ENCODE measurements at regions of chr5 and their contacts with region 1.

Region 1: GRCh38 chr5:133944263-133945185 is 23.9 kb downstream of the C5orf15 start:
- DNase-seq: no peak
- H3K4me3 Mint-ChIP-seq: no peak overlapping the region
- H3K27ac Mint-ChIP-seq: no peak overlapping the region
- H3K4me1 Mint-ChIP-seq: peaks cover 6% of the 10 kb centered on the region
- H3K27me3 Mint-ChIP-seq: no peaks in the 10 kb centered on the region

Region 2: GRCh38 chr5:133423618-133424282 is 520.8 kb before region 1 on chr5:
- intact Hi-C with region 1: loop called (anchors 5 kb)
- DNase-seq: peak; percentile 52
- H3K4me3 Mint-ChIP-seq: no peak overlapping the region
- H3K27ac Mint-ChIP-seq: no peak overlapping the region
- H3K4me1 Mint-ChIP-seq: peaks cover 5% of the 10 kb centered on the region
- H3K27me3 Mint-ChIP-seq: peaks cover 13% of the 10 kb centered on the region

Region 3: GRCh38 chr5:133489632-133490031 is 454.9 kb before region 1 on chr5:
- intact Hi-C with region 1: loop called (anchors 2 kb)
- DNase-seq: no peak
- H3K4me3 Mint-ChIP-seq: no peak overlapping the region
- H3K27ac Mint-ChIP-seq: no peak overlapping the region
- H3K4me1 Mint-ChIP-seq: no peaks in the 10 kb centered on the region
- H3K27me3 Mint-ChIP-seq: peaks cover 4% of the 10 kb centered on the region

Region 4: GRCh38 chr5:133552931-133553525 is 391.5 kb before region 1 on chr5:
- intact Hi-C with region 1: loop called (anchors 1 kb)
- DNase-seq: peak; percentile 40
- H3K4me3 Mint-ChIP-seq: no peak overlapping the region
- H3K27ac Mint-ChIP-seq: no peak overlapping the region
- H3K4me1 Mint-ChIP-seq: peaks cover 4% of the 10 kb centered on the region
- H3K27me3 Mint-ChIP-seq: peaks cover 27% of the 10 kb centered on the region

Region 5: GRCh38 chr5:133754575-133755169 is 189.9 kb before region 1 on chr5:
- intact Hi-C with region 1: loop called (anchors 2 kb)
- DNase-seq: no peak
- H3K4me3 Mint-ChIP-seq: no peak overlapping the region
- H3K27ac Mint-ChIP-seq: no peak overlapping the region
- H3K4me1 Mint-ChIP-seq: peaks cover 6% of the 10 kb centered on the region
- H3K27me3 Mint-ChIP-seq: peaks cover 18% of the 10 kb centered on the region